ENCODE measurements at regions of chr13 and their contacts with region 1.

Region 1: DNA sequence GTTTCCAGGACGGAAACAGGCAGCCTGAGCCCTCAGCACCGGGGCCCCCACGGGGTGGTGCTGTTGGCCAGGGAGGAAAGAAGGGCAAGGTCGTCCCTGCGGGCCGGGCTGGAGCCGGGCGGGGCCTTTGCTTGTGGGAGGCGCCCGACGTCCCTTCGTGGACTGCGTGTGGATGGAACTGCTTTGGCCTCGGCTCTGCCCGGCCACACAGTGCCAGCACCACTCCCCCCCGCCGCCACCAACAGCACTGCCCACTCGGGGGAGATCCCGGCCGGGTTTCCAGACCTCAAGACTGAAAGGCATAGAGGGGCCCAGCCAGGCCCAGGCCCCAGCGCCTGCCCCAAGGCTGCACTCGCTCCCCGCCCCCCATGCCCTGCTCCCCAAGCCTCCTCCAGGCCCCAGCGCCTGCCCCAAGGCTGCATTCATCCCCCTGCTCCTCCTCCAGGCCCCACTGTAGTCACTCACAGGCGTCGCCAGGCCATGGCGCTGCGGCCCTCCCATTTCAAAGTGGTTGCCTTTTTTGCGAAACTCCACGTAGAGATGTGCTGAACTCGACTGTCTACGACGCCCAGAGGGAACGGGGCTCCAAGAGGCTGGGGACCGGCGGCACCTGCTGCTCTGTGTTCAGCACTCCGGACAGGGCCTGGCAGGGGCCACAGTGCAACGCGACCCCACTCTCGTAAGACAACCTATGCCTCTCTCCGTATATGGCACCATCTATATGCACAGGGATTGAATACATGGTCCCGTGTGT is 22.5 kb downstream of the C13orf46 start:
- DNase-seq: peak; percentile 90 to 96 (median 94)
- ATAC-seq: peak; percentile 93 to 95
- H3K4me3 ChIP-seq: no peak overlapping the region
- H3K27ac ChIP-seq: no peak overlapping the region
- H3K4me1 ChIP-seq: no peaks in the 10 kb centered on the region
- H3K27me3 ChIP-seq: no peaks in the 10 kb centered on the region

Region 2: DNA sequence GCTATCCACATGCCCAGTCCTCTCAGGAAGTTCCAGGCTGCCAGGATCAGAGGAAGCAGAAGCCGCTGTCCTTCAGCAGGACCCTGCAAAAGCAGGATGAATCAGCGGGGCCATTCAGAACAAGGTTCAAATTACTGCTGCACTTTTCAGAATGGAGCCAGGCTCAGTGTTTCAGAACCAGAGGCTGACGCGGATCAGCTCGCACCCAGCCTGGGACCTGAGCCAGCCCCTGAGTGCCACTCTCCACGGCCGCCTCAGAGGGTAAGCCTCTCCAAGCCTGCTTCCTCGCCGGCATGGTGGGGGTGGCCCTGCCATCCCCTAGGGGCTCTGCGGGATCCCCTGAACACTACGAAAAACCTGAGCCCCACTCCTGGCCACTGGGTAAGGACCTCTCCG is 156.3 kb after region 1 on chr13:
- intact Hi-C with region 1: no loop called
- DNase-seq: peak; percentile 62 to 86 (median 85)
- ATAC-seq: peak; percentile 69 to 74
- H3K4me3 ChIP-seq: no peak overlapping the region
- H3K27ac ChIP-seq: peak overlapping the region; percentile 9
- H3K4me1 ChIP-seq: no peaks in the 10 kb centered on the region
- H3K27me3 ChIP-seq: no peaks in the 10 kb centered on the region

Region 3: DNA sequence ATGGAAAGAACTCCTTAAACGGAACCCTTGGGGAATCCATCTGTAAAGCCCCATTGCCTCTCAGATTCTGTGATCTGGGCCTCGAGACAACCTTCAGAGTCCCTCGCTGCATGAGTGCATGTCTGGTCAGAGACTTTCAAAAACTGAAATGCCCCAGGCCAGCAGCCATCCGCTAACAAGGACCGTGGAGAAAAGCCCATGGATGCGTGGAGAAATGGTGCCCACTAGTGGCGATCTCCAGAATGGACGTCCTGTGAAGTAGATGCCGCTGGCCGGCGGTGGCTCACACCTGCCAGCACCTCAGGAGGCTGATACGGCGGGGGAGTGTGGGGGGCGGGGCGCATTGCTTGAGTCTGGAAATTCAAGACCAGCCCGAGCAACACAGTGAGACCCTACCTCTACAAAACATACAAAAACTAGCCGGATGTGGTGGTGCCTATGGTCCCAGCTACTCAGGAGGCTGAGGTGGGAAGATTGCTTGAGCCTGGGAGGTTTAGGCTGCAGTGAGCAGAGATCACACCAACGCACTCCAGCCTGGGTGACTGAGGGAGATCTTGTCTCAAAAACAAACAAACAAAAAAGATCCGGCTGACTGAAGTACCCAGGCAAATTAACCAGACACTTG is 275.4 kb after region 1 on chr13:
- intact Hi-C with region 1: loop called (anchors 1 to 2 kb)
- DNase-seq: peak; percentile 80 to 93 (median 90)
- ATAC-seq: peak; percentile 85 to 88
- H3K4me3 ChIP-seq: no peak overlapping the region
- H3K27ac ChIP-seq: no peak overlapping the region
- H3K4me1 ChIP-seq: no peaks in the 10 kb centered on the region
- H3K27me3 ChIP-seq: no peaks in the 10 kb centered on the region